Natural killer cell (primary cell): ENCODE measurements at regions of chr1 and their contacts with region 1.

Region 1: GRCh38 chr1:161209790-161210409 is 5.2 kb upstream of the FCER1G start:
- DNase-seq: peak; percentile 74 to 86
- ATAC-seq: peak; percentile 96 to 100 (median 99)
- H3K4me3 ChIP-seq: no peak overlapping the region
- H3K4me3 Mint-ChIP-seq: peak overlapping the region; percentile 52
- H3K27ac ChIP-seq: no peak overlapping the region
- H3K27ac Mint-ChIP-seq: peak overlapping the region; percentile 77 to 87
- H3K4me1 ChIP-seq: peaks cover 16% of the 10 kb centered on the region
- H3K4me1 Mint-ChIP-seq: peaks cover 38 to 45% of the 10 kb centered on the region in 2 donors
- H3K27me3 ChIP-seq: no peaks in the 10 kb centered on the region
- H3K27me3 Mint-ChIP-seq: no peaks in the 10 kb centered on the region
- CTCF ChIP-seq: peak; percentile 77

Region 2: GRCh38 chr1:161242313-161242712 is 32.4 kb after region 1 on chr1:
- intact Hi-C with region 1: no loop called
- DNase-seq: no peak
- ATAC-seq: no peak
- H3K4me3 ChIP-seq: no peak overlapping the region
- H3K4me3 Mint-ChIP-seq: no peak overlapping the region
- H3K27ac ChIP-seq: no peak overlapping the region
- H3K27ac Mint-ChIP-seq: no peak overlapping the region
- H3K4me1 ChIP-seq: no peaks in the 10 kb centered on the region
- H3K4me1 Mint-ChIP-seq: no peaks in the 10 kb centered on the region
- H3K27me3 ChIP-seq: no peaks in the 10 kb centered on the region
- H3K27me3 Mint-ChIP-seq: peaks cover 3 to 12% of the 10 kb centered on the region in 2 donors
- CTCF ChIP-seq: no peak

Region 3: GRCh38 chr1:161382214-161383019 is 172.5 kb after region 1 on chr1:
- intact Hi-C with region 1: loop called (anchors 1 kb)
- DNase-seq: peak in 1 of 2 donors; percentile 73
- ATAC-seq: peak; percentile 88 to 92 (median 90)
- H3K4me3 ChIP-seq: no peak overlapping the region
- H3K4me3 Mint-ChIP-seq: no peak overlapping the region
- H3K27ac ChIP-seq: no peak overlapping the region
- H3K27ac Mint-ChIP-seq: no peak overlapping the region
- H3K4me1 ChIP-seq: no peaks in the 10 kb centered on the region
- H3K4me1 Mint-ChIP-seq: peaks cover 0 to 8% of the 10 kb centered on the region in 2 donors
- H3K27me3 ChIP-seq: no peaks in the 10 kb centered on the region
- H3K27me3 Mint-ChIP-seq: no peaks in the 10 kb centered on the region
- CTCF ChIP-seq: peak; percentile 79

Region 4: DNA sequence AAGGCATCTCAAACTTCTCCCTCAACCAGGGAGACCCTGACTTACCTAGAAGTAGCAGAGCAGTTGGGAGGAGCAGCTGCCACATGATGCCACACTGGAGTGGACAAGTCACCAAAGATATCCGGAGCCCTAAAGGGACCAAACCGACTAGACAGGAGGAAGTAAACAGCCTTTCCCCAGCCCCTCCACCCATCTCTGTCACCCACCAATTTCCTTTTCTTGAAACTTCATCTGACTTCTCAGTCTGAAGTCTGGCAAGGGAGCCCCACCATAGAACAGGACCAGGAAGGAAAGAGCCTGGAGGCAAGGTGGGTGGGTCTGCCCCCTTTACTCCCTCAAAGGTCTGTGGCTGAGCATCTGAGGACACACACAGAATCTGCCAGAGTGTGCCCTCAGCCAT is 339.8 kb after region 1 on chr1 and contains the start of gene FCGR3A:
- intact Hi-C with region 1: loop called (anchors 10 kb)
- DNase-seq: peak in 1 of 2 donors; percentile 30
- ATAC-seq: peak; percentile 21 to 49 (median 42)
- H3K4me3 ChIP-seq: peak within 1 kb of the TSS; percentile 40
- H3K4me3 Mint-ChIP-seq: peak within 1 kb of the TSS; percentile 92
- H3K27ac ChIP-seq: peak within 1 kb of the TSS; percentile 74
- H3K27ac Mint-ChIP-seq: peak within 1 kb of the TSS; percentile 97 to 100
- H3K4me1 ChIP-seq: peaks cover 50% of the 10 kb centered on the region
- H3K4me1 Mint-ChIP-seq: peaks cover 52 to 69% of the 10 kb centered on the region in 2 donors
- H3K27me3 ChIP-seq: no peaks in the 10 kb centered on the region
- H3K27me3 Mint-ChIP-seq: no peaks in the 10 kb centered on the region
- CTCF ChIP-seq: no peak
- total RNA-seq, gene FCGR3A: 557 to 892 (median 848) TPM

Region 5: GRCh38 chr1:161738627-161739287 is 528.9 kb after region 1 on chr1:
- intact Hi-C with region 1: loop called (anchors 10 kb)
- DNase-seq: peak; percentile 79 to 83
- ATAC-seq: peak; percentile 91 to 93 (median 92)
- H3K4me3 ChIP-seq: no peak overlapping the region
- H3K4me3 Mint-ChIP-seq: peak overlapping the region; percentile 58
- H3K27ac ChIP-seq: peak overlapping the region; percentile 57
- H3K27ac Mint-ChIP-seq: peak overlapping the region; percentile 81 to 84
- H3K4me1 ChIP-seq: peaks cover 32% of the 10 kb centered on the region
- H3K4me1 Mint-ChIP-seq: peaks cover 34 to 45% of the 10 kb centered on the region in 2 donors
- H3K27me3 ChIP-seq: no peaks in the 10 kb centered on the region
- H3K27me3 Mint-ChIP-seq: no peaks in the 10 kb centered on the region
- CTCF ChIP-seq: peak; percentile 55